ENCODE measurements at regions of chr12 and their contacts with region 1.

Region 1: GRCh38 chr12:104381731-104382480 is 74.8 kb upstream of the CHST11 start:
- DNase-seq: peak; percentile 77
- H3K4me3 ChIP-seq: no peak overlapping the region
- H3K27ac ChIP-seq: no peak overlapping the region
- H3K4me1 ChIP-seq: no peaks in the 10 kb centered on the region
- H3K27me3 ChIP-seq: no peaks in the 10 kb centered on the region
- CTCF ChIP-seq: peak; percentile 90 to 93
- POLR2A ChIP-seq: no peak

Region 2: DNA sequence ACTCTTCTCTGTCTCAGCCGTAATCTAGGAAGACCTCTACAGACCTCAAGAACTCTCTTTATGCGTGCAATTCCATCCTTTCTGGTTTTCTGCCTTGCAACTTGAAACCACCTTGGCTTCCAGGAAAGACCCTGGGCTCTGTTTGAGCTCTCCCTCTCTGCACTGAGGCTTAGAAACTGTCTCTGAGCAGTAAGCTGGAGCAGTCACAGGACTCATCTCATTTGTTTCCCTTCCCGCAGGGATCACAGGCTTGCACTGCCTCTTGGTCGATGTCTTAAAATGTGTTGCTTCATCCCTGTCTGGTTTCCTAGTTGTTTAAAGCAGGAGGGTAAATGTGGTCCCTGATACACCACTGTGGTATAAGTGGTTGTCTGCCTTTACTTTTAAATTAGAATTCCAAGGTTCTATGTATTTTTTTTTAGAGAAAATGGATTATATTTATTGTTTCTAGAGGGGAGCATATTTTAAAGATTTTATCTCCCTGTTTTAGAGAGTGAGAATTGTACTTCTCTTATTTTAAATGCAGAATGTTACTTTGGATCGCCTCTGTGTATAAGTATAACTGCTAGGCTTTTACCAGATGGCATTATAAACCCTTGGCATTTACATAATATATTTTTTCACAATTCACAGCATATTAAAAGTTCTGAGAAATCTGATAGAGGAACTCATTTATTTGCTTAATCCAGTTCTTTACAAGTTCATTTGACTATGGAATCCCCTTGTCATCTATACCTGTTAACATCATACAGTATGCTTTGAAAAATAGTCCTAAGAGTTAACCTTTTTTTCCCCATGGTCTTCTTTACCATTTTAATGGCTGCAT is 52.0 kb before region 1 on chr12:
- CTCF ChIA-PET with region 1: no interaction called
- POLR2A ChIA-PET with region 1: no interaction called
- dilution Hi-C with region 1: no loop called
- intact Hi-C with region 1: no loop called
- DNase-seq: no peak
- H3K4me3 ChIP-seq: no peak overlapping the region
- H3K27ac ChIP-seq: no peak overlapping the region
- H3K4me1 ChIP-seq: no peaks in the 10 kb centered on the region
- H3K27me3 ChIP-seq: no peaks in the 10 kb centered on the region
- CTCF ChIP-seq: no peak
- POLR2A ChIP-seq: peak; percentile 33

Region 3: GRCh38 chr12:104371043-104371870 is 10.6 kb before region 1 on chr12:
- CTCF ChIA-PET with region 1: interaction called, 28 read pairs
- POLR2A ChIA-PET with region 1: no interaction called
- dilution Hi-C with region 1: no loop called
- intact Hi-C with region 1: no loop called
- DNase-seq: peak; percentile 62
- H3K4me3 ChIP-seq: no peak overlapping the region
- H3K27ac ChIP-seq: peak overlapping the region; percentile 73
- H3K4me1 ChIP-seq: peaks cover 20% of the 10 kb centered on the region
- H3K27me3 ChIP-seq: no peaks in the 10 kb centered on the region
- CTCF ChIP-seq: no peak
- POLR2A ChIP-seq: peak; percentile 41

Region 4: DNA sequence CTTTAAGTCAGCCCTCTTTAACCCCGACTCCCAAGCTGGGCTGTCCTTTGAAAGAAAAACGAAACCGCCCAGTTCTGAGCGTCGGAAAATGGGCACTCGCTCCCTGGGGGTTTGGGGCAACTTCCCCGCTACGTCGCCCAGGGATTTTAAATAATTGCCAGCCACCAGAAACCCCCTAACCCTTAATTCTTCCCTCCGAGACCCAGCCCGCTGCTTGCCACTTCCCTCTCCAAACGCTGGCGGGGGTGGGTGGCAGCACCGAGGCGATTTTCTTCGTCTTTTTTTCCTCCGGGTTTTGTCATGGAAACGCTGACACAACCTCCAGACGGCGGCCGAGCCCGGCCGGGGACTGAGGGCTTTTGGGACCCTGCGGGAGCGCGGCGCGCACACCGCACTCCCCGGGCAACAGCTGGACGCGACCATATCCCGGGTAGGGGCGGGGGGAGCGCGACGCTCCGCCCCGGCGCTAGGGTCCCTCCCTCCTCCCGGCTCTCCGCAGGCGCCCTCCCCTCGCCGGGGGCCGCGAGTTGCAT is 74.6 kb after region 1 on chr12 and contains the start of gene CHST11:
- CTCF ChIA-PET with region 1: interaction called, 46 read pairs
- POLR2A ChIA-PET with region 1: no interaction called
- dilution Hi-C with region 1: no loop called
- intact Hi-C with region 1: loop called (anchors 2 kb)
- DNase-seq: peak; percentile 95
- H3K4me3 ChIP-seq: peak within 1 kb of the TSS; percentile 64 to 76 (median 68)
- H3K27ac ChIP-seq: peak within 1 kb of the TSS; percentile 36
- H3K4me1 ChIP-seq: peaks cover 40% of the 10 kb centered on the region
- H3K27me3 ChIP-seq: no peaks in the 10 kb centered on the region
- CTCF ChIP-seq: peak; percentile 11 to 41
- POLR2A ChIP-seq: no peak
- total RNA-seq, gene CHST11: 20.9 and 24.2 TPM in 2 replicates

Region 5: GRCh38 chr12:104671407-104672098 is 289.6 kb after region 1 on chr12:
- CTCF ChIA-PET with region 1: interaction called, 19 read pairs
- POLR2A ChIA-PET with region 1: no interaction called
- dilution Hi-C with region 1: no loop called
- intact Hi-C with region 1: loop called (anchors 5 kb)
- DNase-seq: peak; percentile 94
- H3K4me3 ChIP-seq: no peak overlapping the region
- H3K27ac ChIP-seq: peak overlapping the region; percentile 36
- H3K4me1 ChIP-seq: peaks cover 19% of the 10 kb centered on the region
- H3K27me3 ChIP-seq: no peaks in the 10 kb centered on the region
- CTCF ChIP-seq: no peak
- POLR2A ChIP-seq: no peak

Region 6: DNA sequence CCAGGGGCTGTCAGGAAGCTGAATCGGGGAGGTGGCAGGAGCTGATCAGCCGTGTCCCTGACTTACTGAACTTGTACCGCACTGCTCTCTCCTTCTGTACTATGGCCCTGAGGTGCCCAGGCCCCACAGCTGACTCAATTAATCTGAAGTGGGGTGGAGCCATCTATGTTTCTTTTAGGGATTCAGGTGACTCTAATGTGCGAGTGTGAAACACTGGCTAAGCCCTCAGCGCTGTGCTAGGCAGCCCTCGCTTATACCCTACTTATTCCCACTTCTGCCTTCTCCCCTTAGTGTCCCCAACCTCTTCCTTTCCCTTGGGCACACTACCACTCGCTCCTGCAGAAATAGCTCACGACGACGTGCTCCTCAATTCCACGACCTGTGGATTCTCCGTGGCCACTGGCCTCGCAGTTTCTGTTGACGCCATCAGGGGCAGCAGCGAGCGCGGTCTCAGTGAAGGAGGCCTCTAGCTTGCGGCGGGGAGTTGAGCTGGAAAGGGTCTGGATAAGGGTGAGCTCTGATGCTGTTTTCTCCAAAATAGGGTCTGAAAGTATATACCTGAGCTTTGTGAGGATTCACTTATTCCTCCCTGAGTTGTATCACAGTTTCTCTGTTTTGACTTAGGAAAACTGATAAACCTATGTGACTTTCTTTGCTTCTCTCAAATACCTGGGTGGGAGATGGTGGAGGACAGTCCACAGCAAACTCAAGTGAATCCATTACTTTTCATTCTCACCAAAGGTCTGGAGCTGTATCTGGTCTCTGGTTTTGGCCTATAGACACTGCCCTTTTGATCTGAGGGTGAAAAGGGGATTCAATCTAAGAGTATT is 408.6 kb after region 1 on chr12:
- CTCF ChIA-PET with region 1: interaction called, 11 read pairs
- POLR2A ChIA-PET with region 1: no interaction called
- dilution Hi-C with region 1: no loop called
- intact Hi-C with region 1: no loop called
- DNase-seq: peak; percentile 24
- H3K4me3 ChIP-seq: no peak overlapping the region
- H3K27ac ChIP-seq: no peak overlapping the region
- H3K4me1 ChIP-seq: no peaks in the 10 kb centered on the region
- H3K27me3 ChIP-seq: no peaks in the 10 kb centered on the region
- CTCF ChIP-seq: peak; percentile 81 to 83
- POLR2A ChIP-seq: no peak

Region 7: GRCh38 chr12:104870797-104871196 is 488.9 kb after region 1 on chr12:
- CTCF ChIA-PET with region 1: interaction called, 83 read pairs
- POLR2A ChIA-PET with region 1: no interaction called
- dilution Hi-C with region 1: no loop called
- intact Hi-C with region 1: no loop called
- DNase-seq: no peak
- H3K4me3 ChIP-seq: no peak overlapping the region
- H3K27ac ChIP-seq: no peak overlapping the region
- H3K4me1 ChIP-seq: no peaks in the 10 kb centered on the region
- H3K27me3 ChIP-seq: no peaks in the 10 kb centered on the region
- CTCF ChIP-seq: no peak
- POLR2A ChIP-seq: no peak

Region 8: GRCh38 chr12:105053116-105053572 is 671.2 kb after region 1 on chr12:
- CTCF ChIA-PET with region 1: interaction called, 120 read pairs
- POLR2A ChIA-PET with region 1: no interaction called
- dilution Hi-C with region 1: no loop called
- intact Hi-C with region 1: loop called (anchors 1 kb)
- DNase-seq: peak; percentile 86
- H3K4me3 ChIP-seq: no peak overlapping the region
- H3K27ac ChIP-seq: no peak overlapping the region
- H3K4me1 ChIP-seq: no peaks in the 10 kb centered on the region
- H3K27me3 ChIP-seq: no peaks in the 10 kb centered on the region
- CTCF ChIP-seq: peak; percentile 80 to 81
- POLR2A ChIP-seq: no peak